ENCODE measurements at regions of chr6 and their contacts with region 1.

Region 1: GRCh38 chr6:5143634-5144311 is 58.6 kb downstream of the PPP1R3G start:
- DNase-seq: peak; percentile 68

Region 2: GRCh38 chr6:5379647-5380242 is 236.0 kb after region 1 on chr6:
- in situ Hi-C with region 1: loop called (anchors 10 kb)
- DNase-seq: peak; percentile 48

Measured in ACHN (cell line).